Activated CD4-positive, alpha-beta memory T cell treated with anti-CD3 and anti-CD28 coated beads, Interleukin-2, amount 10 ng/mL, durations not matched to agents 7 days and 5 days (primary cell): ENCODE measurements at regions of chr15 and their contacts with region 1.

Region 1: GRCh38 chr15:74873036-74873755 is at the start of gene SCAMP2:
- DNase-seq: peak; percentile 92
- H3K4me3 Mint-ChIP-seq: peak within 1 kb of the TSS; percentile 92
- H3K27ac Mint-ChIP-seq: peak within 1 kb of the TSS; percentile 97
- H3K4me1 Mint-ChIP-seq: peaks cover 48% of the 10 kb centered on the region
- H3K27me3 Mint-ChIP-seq: peaks cover 3% of the 10 kb centered on the region
- total RNA-seq, gene SCAMP2: 144 to 156 TPM

Region 2: GRCh38 chr15:74470631-74471395 is 402.4 kb before region 1 on chr15:
- CTCF ChIA-PET with region 1: no interaction called
- POLR2A ChIA-PET with region 1: no interaction called
- DNase-seq: no peak
- H3K4me3 Mint-ChIP-seq: no peak overlapping the region
- H3K27ac Mint-ChIP-seq: no peak overlapping the region
- H3K4me1 Mint-ChIP-seq: peaks cover 4% of the 10 kb centered on the region
- H3K27me3 Mint-ChIP-seq: no peaks in the 10 kb centered on the region

Region 3: DNA sequence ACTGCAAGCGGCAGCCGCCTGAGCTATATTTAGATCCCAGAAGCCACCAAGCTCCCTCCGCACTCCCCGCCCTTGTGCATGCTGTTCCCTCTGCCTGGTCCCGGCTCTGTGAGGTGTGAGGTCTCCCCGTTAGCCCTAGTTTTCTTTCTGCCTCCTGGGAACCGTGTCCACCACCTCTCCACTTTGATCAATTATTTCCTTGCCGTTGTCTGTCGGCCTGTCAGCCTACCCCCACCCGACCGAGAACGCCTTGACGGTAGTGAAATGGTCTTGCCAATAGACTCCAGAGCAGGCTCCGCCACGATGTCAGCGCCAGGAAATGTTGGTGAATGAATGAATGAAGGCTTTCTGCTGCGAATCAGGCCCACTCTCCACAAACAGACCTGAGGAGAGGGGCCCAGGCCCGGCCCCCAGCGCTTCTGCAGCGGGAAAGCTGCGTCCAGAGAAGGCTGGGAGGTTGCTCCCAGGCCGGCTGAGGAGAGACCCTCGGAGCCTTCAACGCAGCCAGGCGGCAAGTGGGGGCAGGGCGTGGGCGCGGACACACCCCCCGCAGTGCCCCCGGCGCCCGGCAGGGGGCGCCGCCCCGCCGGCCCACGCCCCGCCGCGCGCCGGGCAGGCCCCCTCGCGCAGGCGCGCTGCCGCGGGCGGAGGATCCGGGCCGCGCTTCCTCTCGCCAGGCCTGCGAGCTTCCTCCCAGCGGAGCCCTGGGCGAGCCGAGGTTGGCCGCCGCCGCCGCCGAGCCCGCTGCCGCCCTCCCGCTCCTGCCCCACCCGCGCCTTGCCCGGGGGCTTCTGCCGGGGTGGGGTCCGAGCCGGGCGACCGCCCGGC is 91.6 kb before region 1 on chr15 and contains the start of gene CSK:
- CTCF ChIA-PET with region 1: interaction called, 6 read pairs
- POLR2A ChIA-PET with region 1: interaction called, 24 read pairs
- DNase-seq: peak; percentile 83
- H3K4me3 Mint-ChIP-seq: peak within 1 kb of the TSS; percentile 91
- H3K27ac Mint-ChIP-seq: peak within 1 kb of the TSS; percentile 100
- H3K4me1 Mint-ChIP-seq: peaks cover 60% of the 10 kb centered on the region
- H3K27me3 Mint-ChIP-seq: no peaks in the 10 kb centered on the region
- total RNA-seq, gene CSK: 330 to 341 TPM

Region 4: DNA sequence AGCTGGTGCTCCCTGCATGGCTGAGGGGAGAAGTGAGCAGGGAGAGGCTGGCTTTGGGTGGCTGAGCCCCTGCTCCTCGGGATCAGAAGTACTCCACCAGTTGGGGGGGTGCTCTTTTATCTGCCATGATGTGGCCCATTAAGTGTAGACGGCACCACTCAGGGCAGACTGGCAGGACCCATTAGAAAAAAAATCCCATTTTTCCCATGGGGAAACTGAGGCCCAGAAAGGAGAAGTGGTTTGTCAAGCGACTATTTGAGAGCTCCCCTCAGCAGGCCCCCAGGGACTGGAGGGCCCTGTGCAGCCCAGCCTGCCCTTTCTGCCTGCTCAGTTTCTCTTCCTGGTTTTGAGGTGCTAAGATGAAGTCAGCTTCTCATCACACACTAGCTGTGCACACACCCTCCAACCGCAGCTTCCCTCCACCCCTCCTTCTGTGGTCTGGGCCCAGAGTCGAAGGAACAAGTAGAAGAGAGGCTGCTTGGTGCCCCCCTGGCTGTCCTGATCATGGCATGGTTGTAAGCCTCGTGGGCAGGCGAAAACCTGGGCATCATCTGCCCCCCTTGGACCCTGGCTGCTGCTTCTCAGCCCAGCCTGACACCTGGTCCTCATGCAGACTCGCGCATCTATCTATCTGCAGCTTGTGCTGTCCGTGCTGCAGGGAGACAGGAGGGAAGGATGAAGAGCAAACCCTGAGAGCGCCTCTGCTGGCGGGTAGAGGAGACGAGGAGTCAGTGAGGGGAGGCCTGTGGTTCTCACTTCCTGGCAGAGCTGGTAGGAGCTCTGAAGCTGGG is 85.8 kb before region 1 on chr15:
- CTCF ChIA-PET with region 1: interaction called, 19 read pairs
- POLR2A ChIA-PET with region 1: interaction called, 24 read pairs
- DNase-seq: peak; percentile 95
- H3K4me3 Mint-ChIP-seq: peak overlapping the region; percentile 85
- H3K27ac Mint-ChIP-seq: peak overlapping the region; percentile 97
- H3K4me1 Mint-ChIP-seq: peaks cover 62% of the 10 kb centered on the region
- H3K27me3 Mint-ChIP-seq: no peaks in the 10 kb centered on the region

Region 5: GRCh38 chr15:74842581-74843444 is 30.4 kb before region 1 on chr15 and contains the start of gene ULK3:
- CTCF ChIA-PET with region 1: interaction called, 9 read pairs
- POLR2A ChIA-PET with region 1: interaction called, 66 read pairs
- DNase-seq: peak; percentile 95
- H3K4me3 Mint-ChIP-seq: peak within 1 kb of the TSS; percentile 91
- H3K27ac Mint-ChIP-seq: peak within 1 kb of the TSS; percentile 98
- H3K4me1 Mint-ChIP-seq: peaks cover 63% of the 10 kb centered on the region
- H3K27me3 Mint-ChIP-seq: no peaks in the 10 kb centered on the region
- total RNA-seq, gene ULK3: 74.9 to 84.2 TPM

Region 6: DNA sequence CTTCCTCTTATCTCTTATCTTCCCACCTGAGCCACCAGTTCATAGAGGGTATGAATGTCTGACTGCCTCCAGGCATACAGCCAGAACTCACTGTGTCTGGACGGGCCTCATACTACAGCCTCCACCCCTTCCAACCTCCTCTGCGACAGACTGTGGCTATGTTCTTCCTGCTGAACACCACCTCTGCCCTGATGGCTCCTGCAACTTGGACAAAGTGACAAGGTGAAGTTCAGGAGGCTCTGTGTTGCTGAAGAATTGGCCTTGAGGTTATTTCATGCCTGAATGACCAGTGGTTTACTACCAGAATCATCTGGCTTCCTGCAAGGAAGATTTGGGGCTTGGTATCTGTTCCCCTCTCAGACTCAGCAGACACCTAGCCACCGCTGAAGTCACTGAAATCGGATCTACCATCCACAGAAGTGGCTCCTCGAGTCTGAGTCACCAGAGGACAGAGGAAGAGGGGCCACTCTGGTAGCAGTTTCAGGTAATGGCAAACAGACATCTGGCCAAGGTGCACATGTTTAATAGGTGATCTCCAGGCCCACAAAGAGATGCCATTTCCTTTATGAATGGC is 16.0 kb before region 1 on chr15:
- CTCF ChIA-PET with region 1: interaction called, 17 read pairs
- POLR2A ChIA-PET with region 1: interaction called, 52 read pairs
- DNase-seq: no peak
- H3K4me3 Mint-ChIP-seq: no peak overlapping the region
- H3K27ac Mint-ChIP-seq: peak overlapping the region; percentile 85
- H3K4me1 Mint-ChIP-seq: peaks cover 40% of the 10 kb centered on the region
- H3K27me3 Mint-ChIP-seq: no peaks in the 10 kb centered on the region

Region 7: GRCh38 chr15:74884428-74885223 is 11.4 kb after region 1 on chr15:
- CTCF ChIA-PET with region 1: interaction called, 9 read pairs
- POLR2A ChIA-PET with region 1: interaction called, 110 read pairs
- DNase-seq: no peak
- H3K4me3 Mint-ChIP-seq: no peak overlapping the region
- H3K27ac Mint-ChIP-seq: no peak overlapping the region
- H3K4me1 Mint-ChIP-seq: peaks cover 33% of the 10 kb centered on the region
- H3K27me3 Mint-ChIP-seq: no peaks in the 10 kb centered on the region

Region 8: DNA sequence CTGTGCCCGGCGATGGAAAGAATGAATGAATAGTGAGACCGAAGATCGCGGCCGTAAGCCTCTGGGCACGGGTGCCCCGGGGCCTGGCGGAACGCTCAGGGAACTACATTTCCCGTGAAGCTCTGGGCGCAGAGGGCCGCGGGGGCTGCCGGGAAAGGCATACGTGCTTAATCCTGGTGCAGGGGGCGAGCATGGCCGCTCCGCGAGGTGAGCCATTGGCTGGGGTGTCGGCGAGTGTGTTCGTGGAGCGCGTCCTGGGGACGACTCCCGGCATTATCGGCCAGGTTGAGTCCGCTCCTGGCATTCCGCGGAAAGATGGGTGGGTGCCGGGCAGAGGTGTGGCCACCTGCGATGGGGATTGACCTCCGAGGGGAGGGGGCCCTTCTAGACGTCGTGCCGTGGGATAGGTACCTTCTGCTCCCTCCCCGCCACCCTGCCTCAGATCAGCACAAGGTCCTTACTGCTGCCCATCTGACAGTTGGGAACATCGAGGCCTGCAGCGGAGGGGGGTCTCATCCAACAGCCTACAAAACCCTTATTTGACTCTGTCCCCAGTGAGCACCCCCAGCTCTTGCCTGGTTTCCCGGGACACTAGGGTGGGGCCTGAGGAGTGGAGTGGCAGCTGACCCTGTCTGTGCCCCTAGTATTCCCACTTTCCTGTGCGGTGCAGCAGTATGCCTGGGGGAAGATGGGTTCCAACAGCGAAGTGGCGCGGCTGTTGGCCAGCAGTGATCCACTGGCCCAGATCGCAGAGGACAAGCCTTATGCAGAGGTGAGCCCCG is 16.9 kb after region 1 on chr15 and contains the start of gene MPI:
- CTCF ChIA-PET with region 1: interaction called, 25 read pairs
- POLR2A ChIA-PET with region 1: interaction called, 110 read pairs
- DNase-seq: peak; percentile 89
- H3K4me3 Mint-ChIP-seq: peak within 1 kb of the TSS; percentile 84
- H3K27ac Mint-ChIP-seq: peak within 1 kb of the TSS; percentile 69
- H3K4me1 Mint-ChIP-seq: peaks cover 56% of the 10 kb centered on the region
- H3K27me3 Mint-ChIP-seq: no peaks in the 10 kb centered on the region
- total RNA-seq, gene MPI: 82.8 to 92.9 TPM

Region 9: DNA sequence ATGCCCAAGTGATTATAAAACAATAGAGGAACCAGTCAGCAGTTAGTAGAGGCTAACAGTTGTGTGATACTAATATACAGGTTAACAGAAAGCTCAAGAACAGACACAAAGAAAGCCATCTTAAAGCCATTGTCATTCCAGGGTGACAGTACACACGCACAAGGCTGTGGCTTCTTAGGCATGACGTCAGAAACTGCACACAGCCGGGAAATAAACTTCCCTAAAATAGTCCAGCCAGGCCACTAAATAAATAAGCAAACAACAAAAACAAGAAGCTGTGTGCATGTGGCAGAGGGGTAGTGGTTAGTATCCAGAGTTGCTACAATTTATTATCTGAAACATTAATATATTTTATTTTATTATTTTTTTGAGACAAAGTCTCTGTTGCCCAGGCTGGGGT is 200.0 kb after region 1 on chr15:
- CTCF ChIA-PET with region 1: no interaction called
- POLR2A ChIA-PET with region 1: no interaction called
- DNase-seq: no peak
- H3K4me3 Mint-ChIP-seq: no peak overlapping the region
- H3K27ac Mint-ChIP-seq: peak overlapping the region; percentile 16
- H3K4me1 Mint-ChIP-seq: peaks cover 54% of the 10 kb centered on the region
- H3K27me3 Mint-ChIP-seq: no peaks in the 10 kb centered on the region

Region 10: GRCh38 chr15:75138016-75138999 is 265.1 kb after region 1 on chr15:
- CTCF ChIA-PET with region 1: no interaction called
- POLR2A ChIA-PET with region 1: no interaction called
- DNase-seq: no peak
- H3K4me3 Mint-ChIP-seq: no peak overlapping the region
- H3K27ac Mint-ChIP-seq: no peak overlapping the region
- H3K4me1 Mint-ChIP-seq: no peaks in the 10 kb centered on the region
- H3K27me3 Mint-ChIP-seq: peaks cover 32% of the 10 kb centered on the region